Natural killer cell (primary cell): ENCODE measurements at regions of chr6 and their contacts with region 1.

Region 1: DNA sequence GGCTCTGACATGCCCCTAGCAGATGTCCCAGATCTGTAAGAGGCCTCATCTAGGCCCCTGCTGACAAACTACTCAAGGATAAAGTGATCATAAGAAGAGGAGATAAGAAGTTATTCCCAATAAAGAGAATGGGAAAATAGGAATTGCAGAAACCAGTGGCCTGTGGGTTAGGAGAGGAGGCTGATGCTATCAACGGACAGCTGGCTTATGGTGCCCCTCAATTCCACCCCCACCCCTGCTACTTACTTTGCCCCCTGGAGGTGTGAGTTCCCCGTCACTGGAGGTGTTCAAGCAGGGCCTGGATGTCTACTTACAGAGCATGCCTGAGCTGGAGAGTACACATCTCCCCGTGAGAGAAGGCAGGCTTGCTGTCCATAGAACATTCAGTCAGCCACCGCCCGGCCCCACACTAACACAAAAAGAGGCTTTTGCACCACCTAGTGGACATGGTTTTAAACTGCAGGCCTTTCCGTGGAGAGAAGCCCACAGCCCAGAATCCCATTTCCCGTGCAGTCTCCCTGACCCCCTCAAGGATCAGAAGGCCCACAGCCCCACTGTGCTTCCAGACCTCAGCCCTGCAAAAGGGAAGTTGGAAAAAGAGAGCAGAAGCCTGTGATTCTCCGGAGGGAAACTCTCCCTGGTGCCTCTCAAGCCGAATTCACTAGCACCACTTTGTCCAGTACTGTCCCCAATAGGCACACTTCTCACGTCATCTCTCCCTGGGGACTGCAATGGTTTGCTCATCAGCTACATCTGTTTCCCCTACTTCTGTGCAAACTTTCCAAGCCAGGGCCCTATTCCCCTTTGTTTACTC is 23.8 kb upstream of the BNIP5 start:
- DNase-seq: peak; percentile 55 to 85
- ATAC-seq: peak; percentile 91 to 97 (median 96)
- H3K4me3 ChIP-seq: no peak overlapping the region
- H3K4me3 Mint-ChIP-seq: no peak overlapping the region
- H3K27ac ChIP-seq: no peak overlapping the region
- H3K27ac Mint-ChIP-seq: no peak overlapping the region
- H3K4me1 ChIP-seq: peaks cover 15% of the 10 kb centered on the region
- H3K4me1 Mint-ChIP-seq: peaks cover 0 to 17% of the 10 kb centered on the region in 2 donors
- H3K27me3 ChIP-seq: no peaks in the 10 kb centered on the region
- H3K27me3 Mint-ChIP-seq: peaks cover 3 to 9% of the 10 kb centered on the region in 2 donors
- CTCF ChIP-seq: peak; percentile 81

Region 2: DNA sequence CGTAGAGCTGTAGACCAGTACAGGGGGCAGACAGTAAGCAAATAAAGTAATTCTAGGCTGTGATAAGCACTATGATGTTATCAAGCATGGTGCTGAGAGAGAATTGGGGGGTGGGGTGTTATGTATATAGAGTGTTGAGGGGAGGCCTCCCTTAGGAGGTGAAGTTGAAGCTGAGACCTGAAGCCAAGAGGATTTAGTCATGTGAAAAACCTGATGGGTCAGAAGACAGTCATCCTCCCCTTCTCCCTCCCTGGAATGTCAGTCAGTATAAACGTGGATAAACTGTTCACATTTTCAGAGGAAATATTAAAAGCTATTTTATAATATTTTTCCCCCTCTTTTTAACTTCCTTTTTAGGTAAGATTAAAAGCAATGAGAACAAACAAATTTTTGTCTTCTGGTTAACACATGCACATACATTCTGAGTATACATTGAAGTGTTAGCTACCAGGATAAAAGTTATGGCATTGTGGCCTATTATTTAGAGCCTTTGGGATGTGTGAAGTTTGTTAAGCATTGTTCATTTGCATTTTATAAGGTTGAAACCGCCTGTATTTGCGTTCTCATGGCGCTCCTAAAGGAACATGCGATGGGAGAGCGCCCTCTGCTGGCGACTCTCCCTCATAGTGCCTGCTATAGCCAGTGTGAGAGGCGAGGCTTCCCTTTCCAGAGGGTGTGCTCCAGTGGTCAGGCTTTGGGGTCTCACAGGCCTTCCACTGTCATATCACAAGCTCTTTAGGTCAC is 265.5 kb before region 1 on chr6:
- intact Hi-C with region 1: loop called (anchors 1 kb)
- DNase-seq: peak; percentile 80 to 93
- ATAC-seq: peak; percentile 59 to 79 (median 61)
- H3K4me3 ChIP-seq: no peak overlapping the region
- H3K4me3 Mint-ChIP-seq: no peak overlapping the region
- H3K27ac ChIP-seq: no peak overlapping the region
- H3K27ac Mint-ChIP-seq: peak overlapping the region; percentile 80 to 96
- H3K4me1 ChIP-seq: peaks cover 20% of the 10 kb centered on the region
- H3K4me1 Mint-ChIP-seq: peaks cover 43 to 45% of the 10 kb centered on the region in 2 donors
- H3K27me3 ChIP-seq: no peaks in the 10 kb centered on the region
- H3K27me3 Mint-ChIP-seq: no peaks in the 10 kb centered on the region
- CTCF ChIP-seq: peak; percentile 94

Region 3: GRCh38 chr6:36123257-36124139 is 236.9 kb before region 1 on chr6:
- intact Hi-C with region 1: loop called (anchors 5 kb)
- DNase-seq: peak; percentile 87 to 96
- ATAC-seq: peak; percentile 72 to 88 (median 87)
- H3K4me3 ChIP-seq: no peak overlapping the region
- H3K4me3 Mint-ChIP-seq: peak overlapping the region; percentile 64
- H3K27ac ChIP-seq: peak overlapping the region; percentile 69
- H3K27ac Mint-ChIP-seq: peak overlapping the region; percentile 100
- H3K4me1 ChIP-seq: peaks cover 88% of the 10 kb centered on the region
- H3K4me1 Mint-ChIP-seq: peaks cover 68 to 96% of the 10 kb centered on the region in 2 donors
- H3K27me3 ChIP-seq: no peaks in the 10 kb centered on the region
- H3K27me3 Mint-ChIP-seq: no peaks in the 10 kb centered on the region
- CTCF ChIP-seq: peak; percentile 64

Region 4: DNA sequence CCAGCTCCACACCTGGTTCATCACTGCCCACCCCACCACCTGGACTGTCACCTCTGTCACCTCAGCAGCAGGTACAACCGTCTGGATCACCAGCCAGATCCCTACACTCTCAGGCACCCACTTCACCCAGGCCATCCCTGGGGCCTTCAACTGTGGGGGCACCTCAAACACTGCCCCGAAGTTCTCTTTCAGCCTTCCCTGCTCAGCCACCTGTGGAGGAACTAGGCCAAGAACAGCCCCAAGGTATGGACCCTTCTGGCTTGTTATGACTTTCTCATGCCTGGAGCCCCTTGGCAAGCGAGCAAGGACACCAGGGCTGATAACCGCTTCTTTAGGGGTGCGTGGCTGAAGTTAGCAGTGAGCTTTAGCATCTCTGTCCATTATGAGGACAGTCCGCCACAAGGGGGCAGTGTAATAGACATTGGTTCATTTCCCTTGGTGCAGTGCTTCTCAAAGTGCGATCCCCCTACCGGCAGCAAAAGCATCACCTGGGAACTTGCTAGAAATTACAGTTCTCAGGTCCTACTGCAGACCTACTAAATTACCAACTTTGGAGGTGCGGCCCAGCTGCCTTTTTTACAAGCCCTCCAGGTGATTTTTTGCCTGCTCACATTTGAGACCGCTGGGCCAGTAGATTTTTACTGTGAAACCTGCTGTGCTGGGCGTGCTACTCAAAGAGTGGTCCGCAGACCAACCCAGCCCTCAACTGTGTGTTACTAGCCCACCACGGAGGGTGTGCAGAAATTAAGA is 58.0 kb before region 1 on chr6:
- intact Hi-C with region 1: loop called (anchors 1 kb)
- DNase-seq: peak; percentile 82 to 98
- ATAC-seq: peak; percentile 97 to 100 (median 100)
- H3K4me3 ChIP-seq: no peak overlapping the region
- H3K4me3 Mint-ChIP-seq: no peak overlapping the region
- H3K27ac ChIP-seq: no peak overlapping the region
- H3K27ac Mint-ChIP-seq: no peak overlapping the region
- H3K4me1 ChIP-seq: peaks cover 6% of the 10 kb centered on the region
- H3K4me1 Mint-ChIP-seq: peaks cover 7 to 9% of the 10 kb centered on the region in 2 donors
- H3K27me3 ChIP-seq: no peaks in the 10 kb centered on the region
- H3K27me3 Mint-ChIP-seq: peaks cover 13 to 15% of the 10 kb centered on the region in 2 donors
- CTCF ChIP-seq: peak; percentile 99

Region 5: GRCh38 chr6:36340618-36341454 is 19.6 kb before region 1 on chr6:
- intact Hi-C with region 1: loop called (anchors 2 kb)
- DNase-seq: peak; percentile 69 to 80
- ATAC-seq: peak; percentile 86 to 96 (median 93)
- H3K4me3 ChIP-seq: no peak overlapping the region
- H3K4me3 Mint-ChIP-seq: peak overlapping the region; percentile 60
- H3K27ac ChIP-seq: no peak overlapping the region
- H3K27ac Mint-ChIP-seq: peak overlapping the region in 1 of 2 donors; percentile 65
- H3K4me1 ChIP-seq: peaks cover 18% of the 10 kb centered on the region
- H3K4me1 Mint-ChIP-seq: peaks cover 4 to 5% of the 10 kb centered on the region in 2 donors
- H3K27me3 ChIP-seq: peaks cover 9% of the 10 kb centered on the region
- H3K27me3 Mint-ChIP-seq: peaks cover 18 to 23% of the 10 kb centered on the region in 2 donors
- CTCF ChIP-seq: peak; percentile 99

Region 6: GRCh38 chr6:36962874-36963273 is 602.4 kb after region 1 on chr6:
- intact Hi-C with region 1: no loop called
- DNase-seq: peak; percentile 49 to 87
- ATAC-seq: peak; percentile 58 to 68 (median 59)
- H3K4me3 ChIP-seq: no peak overlapping the region
- H3K4me3 Mint-ChIP-seq: peak overlapping the region; percentile 49
- H3K27ac ChIP-seq: no peak overlapping the region
- H3K27ac Mint-ChIP-seq: peak overlapping the region; percentile 20 to 57
- H3K4me1 ChIP-seq: peaks cover 27% of the 10 kb centered on the region
- H3K4me1 Mint-ChIP-seq: peaks cover 12 to 25% of the 10 kb centered on the region in 2 donors
- H3K27me3 ChIP-seq: no peaks in the 10 kb centered on the region
- H3K27me3 Mint-ChIP-seq: peaks cover 13 to 15% of the 10 kb centered on the region in 2 donors
- CTCF ChIP-seq: no peak